ENCODE measurements at regions of chr7 and their contacts with region 1.

Region 1: DNA sequence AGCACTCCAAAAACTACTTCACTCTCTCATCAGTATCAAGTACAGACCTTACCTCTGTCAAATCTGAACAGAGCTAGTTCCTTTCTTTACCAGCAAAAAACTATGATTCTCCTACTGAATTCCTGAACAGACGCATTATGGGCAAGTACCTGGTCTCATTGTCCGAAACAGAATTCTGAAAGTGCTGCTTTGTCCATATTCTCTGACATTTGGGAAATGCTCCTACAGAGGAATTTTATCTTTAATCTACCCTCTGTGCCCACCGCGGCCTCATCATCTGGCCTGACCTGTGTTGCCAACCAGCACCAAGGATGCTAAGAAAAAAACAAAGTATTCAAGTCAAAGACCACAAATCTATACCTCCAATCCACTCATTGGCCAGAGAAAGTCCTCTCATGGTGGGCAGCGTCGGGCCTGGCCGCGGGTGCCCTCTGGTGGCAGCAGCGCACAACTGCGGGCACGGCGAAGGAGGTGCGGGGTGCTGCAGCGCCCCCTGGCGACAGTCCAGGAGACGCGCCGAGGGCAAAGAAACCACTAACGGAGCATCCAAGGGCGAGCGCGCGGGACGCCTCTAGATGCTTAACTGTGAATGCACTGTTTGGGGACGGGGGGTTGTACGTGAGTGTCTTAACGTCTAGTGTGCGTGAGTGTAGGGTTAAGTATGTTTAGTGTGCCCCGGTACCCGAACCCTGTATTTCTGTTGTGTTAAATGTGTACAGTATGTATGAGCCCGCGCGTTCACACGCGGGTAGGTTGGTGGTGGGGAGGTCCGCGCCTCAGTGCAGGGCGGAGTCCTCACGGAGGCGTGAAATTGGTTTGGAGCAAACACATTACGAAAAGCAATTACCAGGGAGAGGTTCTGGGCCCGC is 5.0 kb upstream of the GBX1 start:
- DNase-seq: peak; percentile 78
- H3K4me3 ChIP-seq: no peak overlapping the region
- H3K27ac ChIP-seq: no peak overlapping the region
- H3K4me1 ChIP-seq: peaks cover 6 to 10% (median 9%) of the 10 kb centered on the region in 4 donors
- H3K27me3 ChIP-seq: peaks cover 88% of the 10 kb centered on the region
- CTCF ChIP-seq: peak; percentile 100
- EP300 ChIP-seq: no peak
- POLR2A ChIP-seq: no peak

Region 2: DNA sequence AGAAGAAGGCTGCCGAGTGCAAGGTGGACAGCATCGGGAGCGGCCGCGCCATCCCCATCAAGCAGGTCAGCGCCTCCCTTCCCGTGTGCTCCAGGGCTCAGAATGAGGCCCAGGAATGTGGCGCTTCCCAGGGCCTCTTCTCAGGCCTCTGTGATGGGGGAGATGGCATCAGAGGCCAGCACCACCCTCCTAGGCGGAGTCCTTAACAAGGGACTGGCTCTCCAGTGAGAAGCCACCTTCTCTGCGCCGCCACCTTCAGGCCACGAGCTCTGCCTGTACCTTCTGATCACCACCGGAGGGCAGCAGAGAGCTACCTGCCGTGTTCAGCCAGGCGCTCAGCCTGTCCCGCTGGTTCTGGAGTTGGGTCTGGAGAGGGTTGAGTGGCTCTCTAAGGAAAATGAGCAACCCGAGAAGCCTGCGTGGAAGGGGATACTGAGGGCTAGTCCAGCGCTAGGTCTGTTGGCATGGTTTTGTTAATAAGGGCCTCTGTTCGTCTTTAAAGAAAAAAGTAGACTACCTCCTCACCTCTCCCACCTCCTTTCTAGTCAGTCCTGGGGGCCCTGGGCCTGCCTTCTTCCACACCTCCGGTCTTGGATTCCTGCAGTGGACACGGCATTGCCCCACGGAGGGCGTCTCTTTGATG is 48.6 kb before region 1 on chr7:
- in situ Hi-C with region 1: loop called in 2 of 4 experiments (anchors 5 to 10 kb)
- intact Hi-C with region 1: loop called (anchors 5 kb)
- DNase-seq: peak; percentile 88
- H3K4me3 ChIP-seq: no peak overlapping the region
- H3K27ac ChIP-seq: no peak overlapping the region
- H3K4me1 ChIP-seq: peaks cover 0 to 25% (median 19%) of the 10 kb centered on the region in 4 donors
- H3K27me3 ChIP-seq: no peaks in the 10 kb centered on the region
- CTCF ChIP-seq: peak; percentile 97 to 99 (median 97)
- EP300 ChIP-seq: no peak
- POLR2A ChIP-seq: no peak